WTC11 (cell line): ENCODE measurements at regions of chr11 and their contacts with region 1.

Region 1: GRCh38 chr11:75425422-75425821 is 7.6 kb downstream of the KLHL35 start:
- DNase-seq: peak; percentile 81
- ATAC-seq: peak; percentile 73
- H3K4me3 Mint-ChIP-seq: no peak overlapping the region
- H3K27ac Mint-ChIP-seq: no peak overlapping the region
- H3K4me1 Mint-ChIP-seq: peaks cover 21% of the 10 kb centered on the region
- H3K27me3 Mint-ChIP-seq: peaks cover 42% of the 10 kb centered on the region
- CTCF ChIP-seq: no peak; the same call in 1 of the 2 replicates

Region 2: GRCh38 chr11:75004215-75004614 is 421.2 kb before region 1 on chr11:
- CTCF ChIA-PET with region 1: no interaction called
- POLR2A ChIA-PET with region 1: no interaction called
- DNase-seq: no peak
- ATAC-seq: no peak
- H3K4me3 Mint-ChIP-seq: no peak overlapping the region
- H3K27ac Mint-ChIP-seq: no peak overlapping the region
- H3K4me1 Mint-ChIP-seq: no peaks in the 10 kb centered on the region
- H3K27me3 Mint-ChIP-seq: no peaks in the 10 kb centered on the region
- CTCF ChIP-seq: no peak

Region 3: DNA sequence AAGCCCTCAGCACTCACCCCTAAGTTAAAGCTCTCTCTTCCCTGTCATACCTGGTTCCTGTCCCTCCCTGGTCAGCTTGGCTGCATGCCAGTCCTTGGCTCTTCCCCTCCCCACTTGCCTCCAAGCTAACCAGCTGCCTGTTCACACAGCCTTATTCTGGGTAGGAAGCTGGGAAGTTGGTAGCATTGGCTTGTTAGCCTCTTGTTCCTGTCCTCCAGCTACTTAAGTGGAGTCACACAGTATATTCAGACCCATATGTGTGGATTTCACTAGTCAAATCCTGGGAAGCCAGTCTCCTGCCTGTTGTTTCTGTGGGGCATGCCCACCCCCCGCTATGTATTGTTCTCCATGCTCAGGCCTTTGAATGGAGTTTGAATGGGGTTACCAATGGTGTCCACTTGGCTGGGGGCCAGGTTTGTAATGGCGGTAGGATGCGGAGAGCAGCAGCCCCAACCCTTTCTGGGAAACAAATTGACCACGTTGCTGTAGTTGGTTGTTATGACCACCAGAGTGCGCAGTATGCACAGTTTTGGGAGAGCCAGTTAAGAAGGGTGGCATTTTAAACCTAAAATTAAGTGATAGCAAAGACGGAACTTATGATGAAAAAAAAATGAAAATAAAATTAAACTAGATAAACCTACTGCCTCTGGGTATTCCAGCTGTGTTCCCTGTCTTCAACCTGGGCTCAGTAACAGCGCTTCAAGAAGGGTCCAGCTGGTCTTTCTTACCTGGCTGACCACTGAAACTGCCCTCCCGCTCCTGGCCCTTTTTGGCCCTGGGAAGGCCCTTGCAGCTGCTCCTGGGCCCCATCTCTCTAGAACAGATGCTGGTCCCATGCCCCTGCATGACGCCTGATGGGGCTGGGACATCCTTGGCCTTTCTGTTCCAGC is 36.8 kb before region 1 on chr11:
- CTCF ChIA-PET with region 1: interaction called, 39 read pairs
- POLR2A ChIA-PET with region 1: no interaction called
- DNase-seq: peak; percentile 75
- ATAC-seq: peak; percentile 78
- H3K4me3 Mint-ChIP-seq: no peak overlapping the region
- H3K27ac Mint-ChIP-seq: no peak overlapping the region
- H3K4me1 Mint-ChIP-seq: peaks cover 20% of the 10 kb centered on the region
- H3K27me3 Mint-ChIP-seq: peaks cover 2% of the 10 kb centered on the region; the same call in 1 of the 2 replicates
- CTCF ChIP-seq: peak; percentile 69

Region 4: DNA sequence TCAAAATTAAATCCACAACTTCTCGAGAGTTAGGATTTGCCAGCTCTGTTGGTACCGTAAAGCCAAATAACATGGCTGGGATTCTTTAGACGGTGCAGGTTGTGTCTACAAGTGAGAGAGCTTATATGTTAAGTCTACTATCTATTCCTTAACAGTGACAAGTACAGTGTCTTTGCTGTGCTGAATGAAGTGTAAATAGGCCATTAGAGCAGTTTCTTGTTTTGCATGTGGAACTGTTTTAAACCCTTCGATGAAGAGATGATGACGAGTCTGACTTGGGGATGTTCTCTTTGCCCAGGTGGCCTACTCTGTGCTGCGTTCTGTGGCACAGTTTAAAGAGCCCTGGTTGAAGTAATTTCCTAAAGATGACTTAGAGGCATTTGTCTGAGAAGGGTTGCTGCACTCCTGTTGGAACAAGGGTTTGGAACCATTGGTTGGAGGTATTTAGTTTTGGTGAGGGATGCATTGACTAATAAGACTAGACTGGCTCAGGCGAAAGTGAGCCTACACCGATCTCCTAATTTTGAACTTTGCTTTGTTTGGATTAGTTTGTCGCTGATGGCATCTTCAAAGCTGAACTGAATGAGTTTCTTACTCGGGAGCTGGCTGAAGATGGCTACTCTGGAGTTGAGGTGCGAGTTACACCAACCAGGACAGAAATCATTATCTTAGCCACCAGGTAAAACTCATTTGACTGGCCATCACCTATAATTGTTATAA is 25.1 kb before region 1 on chr11:
- CTCF ChIA-PET with region 1: interaction called, 10 read pairs
- POLR2A ChIA-PET with region 1: interaction called, 3 read pairs
- DNase-seq: no peak
- ATAC-seq: no peak
- H3K4me3 Mint-ChIP-seq: peak overlapping the region; percentile 100
- H3K27ac Mint-ChIP-seq: peak overlapping the region; percentile 99
- H3K4me1 Mint-ChIP-seq: peaks cover 40% of the 10 kb centered on the region
- H3K27me3 Mint-ChIP-seq: peaks cover 2% of the 10 kb centered on the region; the same call in 1 of the 2 replicates
- CTCF ChIP-seq: no peak

Region 5: GRCh38 chr11:75406338-75406777 is 19.1 kb before region 1 on chr11:
- CTCF ChIA-PET with region 1: interaction called, 23 read pairs
- POLR2A ChIA-PET with region 1: interaction called, 3 read pairs
- DNase-seq: no peak
- ATAC-seq: no peak
- H3K4me3 Mint-ChIP-seq: no peak overlapping the region
- H3K27ac Mint-ChIP-seq: no peak overlapping the region
- H3K4me1 Mint-ChIP-seq: peaks cover 38% of the 10 kb centered on the region
- H3K27me3 Mint-ChIP-seq: no peaks in the 10 kb centered on the region
- CTCF ChIP-seq: no peak

Region 6: GRCh38 chr11:75413864-75414263 is 11.6 kb before region 1 on chr11:
- CTCF ChIA-PET with region 1: interaction called, 23 read pairs
- POLR2A ChIA-PET with region 1: interaction called, 14 read pairs
- DNase-seq: no peak
- ATAC-seq: no peak
- H3K4me3 Mint-ChIP-seq: no peak overlapping the region
- H3K27ac Mint-ChIP-seq: peak overlapping the region; percentile 16; the same call in 1 of the 2 replicates
- H3K4me1 Mint-ChIP-seq: no peaks in the 10 kb centered on the region
- H3K27me3 Mint-ChIP-seq: no peaks in the 10 kb centered on the region
- CTCF ChIP-seq: no peak

Region 7: DNA sequence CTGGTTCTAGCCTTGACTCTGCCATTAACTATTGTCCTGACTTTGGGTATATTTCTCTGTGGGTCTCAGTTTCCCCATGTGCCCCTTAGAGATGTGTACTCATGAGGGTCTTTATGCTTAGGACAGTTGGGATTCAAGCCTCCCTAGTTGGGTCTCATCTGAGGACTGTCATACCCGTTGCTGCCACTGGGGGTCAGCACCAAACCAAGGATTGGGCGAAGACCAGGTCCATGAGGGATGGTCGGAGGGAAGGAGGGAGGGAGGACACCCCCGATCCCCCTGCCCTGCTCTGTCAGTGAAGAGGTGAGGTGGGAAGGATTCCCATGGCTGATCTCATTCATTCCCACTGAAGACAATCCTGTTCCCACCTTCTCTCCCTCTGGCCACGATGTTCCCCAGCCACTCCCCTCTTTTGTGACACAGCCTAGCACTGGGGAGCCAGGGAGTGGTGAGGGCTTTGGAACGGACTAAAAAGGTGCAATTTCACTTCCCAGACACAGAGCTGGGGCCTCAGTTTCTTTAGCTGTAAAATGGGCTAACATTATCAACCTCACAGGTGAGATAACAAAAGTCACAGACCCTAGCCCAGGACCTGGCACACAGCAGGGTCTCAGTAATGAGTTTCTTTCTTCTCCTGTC is 20.0 kb after region 1 on chr11:
- CTCF ChIA-PET with region 1: interaction called, 10 read pairs
- POLR2A ChIA-PET with region 1: no interaction called
- DNase-seq: peak; percentile 88
- ATAC-seq: peak; percentile 91
- H3K4me3 Mint-ChIP-seq: no peak overlapping the region
- H3K27ac Mint-ChIP-seq: no peak overlapping the region
- H3K4me1 Mint-ChIP-seq: no peaks in the 10 kb centered on the region
- H3K27me3 Mint-ChIP-seq: no peaks in the 10 kb centered on the region; the same call in none of the 2 replicates
- CTCF ChIP-seq: peak; percentile 97

Region 8: GRCh38 chr11:75907906-75908527 is 482.6 kb after region 1 on chr11:
- CTCF ChIA-PET with region 1: no interaction called
- POLR2A ChIA-PET with region 1: no interaction called
- DNase-seq: no peak
- ATAC-seq: no peak
- H3K4me3 Mint-ChIP-seq: no peak overlapping the region
- H3K27ac Mint-ChIP-seq: no peak overlapping the region
- H3K4me1 Mint-ChIP-seq: no peaks in the 10 kb centered on the region
- H3K27me3 Mint-ChIP-seq: no peaks in the 10 kb centered on the region
- CTCF ChIP-seq: no peak